ENCODE measurements at regions of chr1 and their contacts with region 1.

Region 1: DNA sequence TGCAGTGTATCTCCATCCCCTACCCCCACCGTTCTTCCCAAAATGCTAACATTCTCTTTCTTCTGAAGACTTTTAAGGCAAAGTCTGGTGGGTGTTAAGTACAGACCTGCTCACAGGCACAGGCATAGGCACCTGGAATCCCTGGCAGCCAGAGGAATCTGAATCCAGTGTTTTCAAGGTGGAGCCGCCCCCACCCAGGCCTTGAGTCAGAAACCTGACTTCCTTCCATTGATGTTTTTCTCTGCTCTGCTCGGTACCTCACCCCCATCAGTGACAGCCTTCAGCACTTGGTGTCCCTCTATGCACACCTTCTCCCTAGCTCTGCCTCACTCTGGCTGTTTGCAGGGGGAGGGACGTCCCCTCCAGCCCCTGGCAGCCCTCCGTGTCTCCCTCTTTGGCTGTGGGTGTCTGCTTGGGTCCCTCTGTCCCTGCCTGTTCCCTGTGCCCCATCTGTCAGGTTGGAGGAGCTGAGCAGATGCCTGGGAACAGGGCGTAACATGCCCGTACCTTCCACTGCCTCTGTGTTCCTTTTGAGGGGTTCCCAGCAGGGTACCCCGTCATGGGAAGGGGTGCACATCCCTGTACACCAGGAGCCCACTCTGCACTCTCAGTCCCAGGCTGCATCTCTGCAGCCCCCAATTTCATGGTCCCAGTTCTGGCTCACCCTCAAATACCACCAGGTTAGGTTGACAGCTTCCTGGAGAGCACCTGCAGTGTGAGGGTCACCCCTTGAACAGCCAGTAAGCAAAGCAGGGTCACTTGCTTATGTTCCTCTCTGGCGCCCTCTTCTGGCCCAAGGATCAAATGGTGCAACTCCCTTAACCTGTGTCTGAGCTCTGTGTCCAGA is 6.7 kb downstream of the NCDN start:
- DNase-seq: peak; percentile 83
- ATAC-seq: peak; percentile 35

Region 2: DNA sequence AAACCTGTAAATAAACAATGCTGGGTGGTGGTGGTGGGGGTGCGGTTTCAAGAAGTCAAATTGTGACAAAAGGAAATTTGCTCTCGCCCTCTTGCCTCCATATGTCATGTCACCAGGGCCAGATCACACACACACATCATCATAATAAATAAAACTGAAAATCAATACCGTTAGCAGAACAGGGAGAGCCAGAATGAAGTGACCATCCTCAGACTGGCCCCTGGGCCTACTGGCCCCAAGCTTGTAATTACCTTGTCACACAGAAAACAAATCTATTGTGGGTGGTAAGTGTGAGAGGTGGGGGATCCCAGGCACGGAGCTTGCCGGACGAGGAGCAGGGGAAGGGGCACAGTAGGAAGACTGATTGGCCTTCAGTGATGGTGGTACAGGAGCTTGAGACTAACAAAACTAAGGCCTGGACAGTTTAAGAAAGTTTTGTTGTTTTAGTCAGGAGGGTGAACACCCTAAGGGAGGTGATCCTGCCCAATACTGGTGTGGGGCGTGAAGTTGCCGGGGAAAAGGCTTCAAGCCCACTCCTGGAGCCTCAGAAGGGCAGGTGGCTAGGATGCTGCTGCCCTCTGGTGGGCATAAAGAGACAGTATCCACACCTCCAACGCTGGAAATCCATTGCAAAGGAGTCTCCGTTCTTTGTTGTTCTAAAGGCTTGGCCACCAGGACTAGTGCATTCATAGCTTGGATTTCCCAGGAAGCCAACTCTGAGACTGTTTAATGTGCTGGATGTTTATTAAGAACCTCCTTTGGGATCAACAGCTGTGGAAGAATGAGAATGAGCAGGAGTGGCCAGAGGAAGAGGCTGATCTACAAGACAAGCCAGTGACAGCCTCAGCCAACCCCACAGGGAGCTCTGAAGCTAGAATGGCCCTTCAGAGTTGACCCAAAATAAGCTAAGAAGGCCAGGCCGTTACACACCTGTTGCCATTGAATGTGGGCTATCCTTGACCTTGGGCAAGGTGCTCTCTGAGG is 162.5 kb after region 1 on chr1:
- intact Hi-C with region 1: loop called (anchors 2 kb)
- DNase-seq: no peak
- ATAC-seq: peak; percentile 62

Region 3: DNA sequence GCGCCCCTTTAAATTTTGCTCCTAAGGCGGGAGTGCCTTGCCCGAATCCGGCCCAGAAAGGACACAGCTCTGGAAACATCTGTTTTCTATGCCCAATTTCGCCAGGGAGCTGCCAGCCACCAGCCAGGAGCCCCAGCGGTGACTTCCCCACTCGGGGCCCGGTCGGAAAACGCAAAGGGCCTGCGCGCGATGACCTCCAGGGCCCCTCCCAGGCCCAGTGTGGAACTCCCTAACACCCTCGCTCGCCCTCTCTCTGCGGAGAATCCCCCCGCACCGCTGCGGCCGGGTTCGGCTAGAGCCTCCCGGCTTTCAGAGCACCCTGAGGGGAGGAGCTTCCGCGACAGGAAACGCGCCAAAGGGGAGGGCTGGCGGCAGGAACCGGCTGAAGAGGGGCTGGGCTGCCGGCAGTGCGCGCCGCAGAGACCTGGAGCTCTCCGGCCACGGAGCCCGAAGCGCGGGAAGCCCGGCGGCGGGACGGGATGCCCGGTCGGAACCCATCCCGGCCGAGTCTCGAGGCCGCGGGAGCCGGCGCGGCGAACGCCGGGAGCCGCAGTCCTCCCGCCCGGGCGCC is 205.0 kb after region 1 on chr1:
- intact Hi-C with region 1: loop called (anchors 2 kb)
- DNase-seq: peak; percentile 91
- ATAC-seq: peak; percentile 91

Measured in Right ventricle myocardium inferior (tissue), 1 donor.